ENCODE measurements at regions of chr3 and their contacts with region 1.

Region 1: GRCh38 chr3:61927332-61927731 is 366.0 kb downstream of the PTPRG start:
- DNase-seq: peak; percentile 77 to 90 (median 86)
- ATAC-seq: peak; percentile 90 to 93 (median 92)
- H3K4me3 ChIP-seq: peak overlapping the region in 3 of 12 donors; percentile 6 to 30 (median 13)
- H3K27ac ChIP-seq: peak overlapping the region; percentile 29 to 91 (median 76)
- H3K4me1 ChIP-seq: peaks cover 9 to 73% (median 50%) of the 10 kb centered on the region in 12 donors
- H3K27me3 ChIP-seq: no peaks in the 10 kb centered on the region
- CTCF ChIP-seq: no peak
- POLR2A ChIP-seq: no peak

Region 2: GRCh38 chr3:61682671-61683548 is 244.4 kb before region 1 on chr3:
- intact Hi-C with region 1: loop called in 1 of 10 experiments (anchors 5 kb)
- DNase-seq: no peak
- ATAC-seq: peak in 2 of 4 donors; percentile 23 to 43
- H3K4me3 ChIP-seq: no peak overlapping the region
- H3K27ac ChIP-seq: peak overlapping the region in 5 of 12 donors; percentile 18 to 59 (median 31)
- H3K4me1 ChIP-seq: peaks cover 5 to 53% (median 25%) of the 10 kb centered on the region in 12 donors
- H3K27me3 ChIP-seq: no peaks in the 10 kb centered on the region
- CTCF ChIP-seq: no peak
- POLR2A ChIP-seq: no peak

Region 3: GRCh38 chr3:62131592-62131991 is 204.3 kb after region 1 on chr3:
- intact Hi-C with region 1: loop called in 1 of 10 experiments (anchors 10 kb)
- DNase-seq: no peak
- ATAC-seq: no peak
- H3K4me3 ChIP-seq: no peak overlapping the region
- H3K27ac ChIP-seq: no peak overlapping the region
- H3K4me1 ChIP-seq: peaks cover 5 to 51% (median 27%) of the 10 kb centered on the region in 12 donors
- H3K27me3 ChIP-seq: no peaks in the 10 kb centered on the region
- CTCF ChIP-seq: peak in 11 of 12 donors; percentile 13 to 59 (median 51)
- POLR2A ChIP-seq: no peak

Region 4: GRCh38 chr3:62299857-62300406 is 372.6 kb after region 1 on chr3:
- intact Hi-C with region 1: no loop called
- DNase-seq: no peak
- ATAC-seq: no peak
- H3K4me3 ChIP-seq: no peak overlapping the region
- H3K27ac ChIP-seq: no peak overlapping the region
- H3K4me1 ChIP-seq: peaks cover 0 to 7% (median 0%) of the 10 kb centered on the region in 12 donors
- H3K27me3 ChIP-seq: no peaks in the 10 kb centered on the region
- CTCF ChIP-seq: no peak
- POLR2A ChIP-seq: no peak